B cell (primary cell): ENCODE measurements at regions of chr5 and their contacts with region 1.

Region 1: GRCh38 chr5:59039296-59040023 is 456.6 kb downstream of the RAB3C start:
- DNase-seq: peak; percentile 68
- ATAC-seq: peak; percentile 75
- H3K4me3 ChIP-seq: peak overlapping the region; percentile 31 to 66 (median 53)
- H3K4me3 Mint-ChIP-seq: peak overlapping the region; percentile 96
- H3K27ac ChIP-seq: no peak overlapping the region
- H3K27ac Mint-ChIP-seq: peak overlapping the region; percentile 93
- H3K4me1 ChIP-seq: peaks cover 20% of the 10 kb centered on the region in 2 donors
- H3K4me1 Mint-ChIP-seq: peaks cover 30% of the 10 kb centered on the region
- H3K27me3 ChIP-seq: peaks cover 0 to 27% (median 13%) of the 10 kb centered on the region in 4 experiments
- H3K27me3 Mint-ChIP-seq: peaks cover 28% of the 10 kb centered on the region
- CTCF ChIP-seq: no peak

Region 2: GRCh38 chr5:59109383-59109782 is 69.9 kb after region 1 on chr5:
- CTCF ChIA-PET with region 1: no interaction called
- POLR2A ChIA-PET with region 1: no interaction called
- intact Hi-C with region 1: no loop called
- DNase-seq: no peak
- ATAC-seq: no peak
- H3K4me3 ChIP-seq: no peak overlapping the region
- H3K4me3 Mint-ChIP-seq: no peak overlapping the region
- H3K27ac ChIP-seq: no peak overlapping the region
- H3K27ac Mint-ChIP-seq: no peak overlapping the region
- H3K4me1 ChIP-seq: no peaks in the 10 kb centered on the region
- H3K4me1 Mint-ChIP-seq: peaks cover 2% of the 10 kb centered on the region
- H3K27me3 ChIP-seq: no peaks in the 10 kb centered on the region
- H3K27me3 Mint-ChIP-seq: no peaks in the 10 kb centered on the region
- CTCF ChIP-seq: no peak

Region 3: GRCh38 chr5:59164041-59164830 is 124.8 kb after region 1 on chr5:
- CTCF ChIA-PET with region 1: no interaction called
- POLR2A ChIA-PET with region 1: no interaction called
- intact Hi-C with region 1: no loop called
- DNase-seq: no peak
- ATAC-seq: no peak
- H3K4me3 ChIP-seq: no peak overlapping the region
- H3K4me3 Mint-ChIP-seq: no peak overlapping the region
- H3K27ac ChIP-seq: no peak overlapping the region
- H3K27ac Mint-ChIP-seq: no peak overlapping the region
- H3K4me1 ChIP-seq: no peaks in the 10 kb centered on the region
- H3K4me1 Mint-ChIP-seq: no peaks in the 10 kb centered on the region
- H3K27me3 ChIP-seq: no peaks in the 10 kb centered on the region
- H3K27me3 Mint-ChIP-seq: no peaks in the 10 kb centered on the region
- CTCF ChIP-seq: no peak

Region 4: GRCh38 chr5:59174248-59174844 is 134.9 kb after region 1 on chr5:
- CTCF ChIA-PET with region 1: interaction called, 71 read pairs
- POLR2A ChIA-PET with region 1: no interaction called
- intact Hi-C with region 1: loop called (anchors 1 kb)
- DNase-seq: peak; percentile 33
- ATAC-seq: peak; percentile 56
- H3K4me3 ChIP-seq: no peak overlapping the region
- H3K4me3 Mint-ChIP-seq: no peak overlapping the region
- H3K27ac ChIP-seq: no peak overlapping the region
- H3K27ac Mint-ChIP-seq: no peak overlapping the region
- H3K4me1 ChIP-seq: peaks cover 0 to 5% of the 10 kb centered on the region in 2 donors
- H3K4me1 Mint-ChIP-seq: peaks cover 3% of the 10 kb centered on the region
- H3K27me3 ChIP-seq: no peaks in the 10 kb centered on the region
- H3K27me3 Mint-ChIP-seq: no peaks in the 10 kb centered on the region
- CTCF ChIP-seq: peak; percentile 62